Heart left ventricle (tissue), 16 donors: ENCODE measurements at regions of chr10 and their contacts with region 1.

Region 1: GRCh38 chr10:76778914-76779795 is 858.5 kb downstream of the KCNMA1 start:
- DNase-seq: no peak
- ATAC-seq: no peak
- H3K4me3 ChIP-seq: no peak overlapping the region
- H3K27ac ChIP-seq: peak overlapping the region in 2 of 12 donors; percentile 21 to 55
- H3K4me1 ChIP-seq: peaks cover 0 to 24% (median 0%) of the 10 kb centered on the region in 12 donors
- H3K27me3 ChIP-seq: no peaks in the 10 kb centered on the region
- CTCF ChIP-seq: peak in 2 of 12 donors; percentile 14 to 27
- POLR2A ChIP-seq: no peak

Region 2: DNA sequence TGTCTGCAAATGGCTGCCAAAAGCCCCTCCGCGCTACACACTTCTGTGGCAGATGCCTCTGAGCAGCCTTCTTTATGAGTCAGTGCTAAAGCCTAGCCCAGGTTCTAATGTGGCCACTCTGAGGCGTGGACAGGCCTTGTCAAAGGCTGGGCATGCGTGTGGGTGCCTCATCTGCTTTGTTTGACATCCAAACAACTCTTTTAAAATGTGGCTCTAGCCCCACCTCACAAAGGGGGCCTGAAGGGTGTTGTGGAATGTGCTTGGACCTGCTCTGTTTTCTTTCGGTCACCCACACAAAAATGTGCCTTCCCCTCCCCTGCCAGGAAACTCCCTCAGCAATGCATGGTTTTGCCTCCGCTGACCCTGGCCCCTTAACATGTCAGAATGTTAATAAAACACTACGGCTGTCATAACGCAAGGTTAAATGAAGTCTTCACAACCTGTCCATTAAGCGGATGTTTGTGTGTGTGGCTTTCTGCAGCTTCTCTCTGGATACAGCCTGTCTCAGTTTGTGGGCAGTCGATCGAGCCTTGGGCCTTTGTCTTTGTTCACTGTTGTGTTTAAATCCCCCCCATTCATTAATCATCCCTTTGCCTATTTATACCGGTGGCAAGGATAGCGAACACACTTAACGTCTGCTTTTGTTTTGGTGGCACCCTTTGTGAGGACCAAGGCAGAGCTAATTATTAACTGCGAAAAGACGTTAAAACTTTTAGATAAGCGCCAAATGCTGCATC is 628.8 kb before region 1 on chr10:
- intact Hi-C with region 1: no loop called
- DNase-seq: no peak
- ATAC-seq: no peak
- H3K4me3 ChIP-seq: no peak overlapping the region
- H3K27ac ChIP-seq: peak overlapping the region in 1 of 12 donors; percentile 73
- H3K4me1 ChIP-seq: peaks cover 0 to 3% (median 0%) of the 10 kb centered on the region in 12 donors
- H3K27me3 ChIP-seq: no peaks in the 10 kb centered on the region
- CTCF ChIP-seq: no peak
- POLR2A ChIP-seq: no peak

Region 3: DNA sequence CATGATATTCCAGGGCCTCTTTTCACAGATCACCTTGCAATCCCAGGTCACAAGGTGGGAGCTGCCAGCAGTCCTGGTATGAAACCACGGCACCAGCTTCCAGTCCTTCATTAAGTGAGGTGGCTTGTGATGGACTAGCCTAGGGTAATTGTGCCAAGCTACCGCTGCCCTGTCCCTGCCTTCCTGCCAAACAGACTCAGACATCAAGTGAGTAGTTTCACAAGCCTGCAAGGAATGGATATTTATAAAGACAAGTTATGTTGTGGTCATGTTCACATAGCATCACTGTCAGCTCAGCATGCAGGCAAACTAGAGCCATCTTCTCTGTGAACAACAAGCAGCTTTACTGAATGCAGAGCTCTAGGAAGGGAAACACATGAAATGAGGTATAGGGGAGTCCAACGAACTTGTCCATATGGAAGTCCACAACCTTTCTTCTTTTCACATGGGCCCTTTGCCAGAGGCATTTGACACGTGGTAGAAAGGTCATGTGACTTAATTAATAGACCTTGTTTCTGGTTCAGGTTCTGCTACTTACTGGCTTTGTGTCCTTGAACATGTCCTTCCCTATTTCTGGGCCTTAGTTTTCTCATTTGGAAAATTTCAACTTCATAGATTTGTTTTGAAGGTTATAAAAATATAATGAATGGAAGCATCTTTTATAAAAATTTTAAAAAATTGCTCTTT is 202.7 kb before region 1 on chr10:
- intact Hi-C with region 1: loop called in 1 of 10 experiments (anchors 1 kb)
- DNase-seq: peak in 2 of 5 donors; percentile 50 to 65
- ATAC-seq: peak in 3 of 4 donors; percentile 84 to 96 (median 96)
- H3K4me3 ChIP-seq: no peak overlapping the region
- H3K27ac ChIP-seq: peak overlapping the region in 7 of 12 donors; percentile 14 to 73 (median 37)
- H3K4me1 ChIP-seq: peaks cover 0 to 5% (median 0%) of the 10 kb centered on the region in 12 donors
- H3K27me3 ChIP-seq: no peaks in the 10 kb centered on the region
- CTCF ChIP-seq: no peak
- POLR2A ChIP-seq: no peak

Region 4: GRCh38 chr10:76649723-76650127 is 129.4 kb before region 1 on chr10:
- intact Hi-C with region 1: loop called in 1 of 10 experiments (anchors 10 kb)
- DNase-seq: peak in 2 of 5 donors; percentile 22 to 41
- ATAC-seq: peak in 3 of 4 donors; percentile 36 to 73 (median 61)
- H3K4me3 ChIP-seq: no peak overlapping the region
- H3K27ac ChIP-seq: peak overlapping the region in 1 of 12 donors; percentile 61
- H3K4me1 ChIP-seq: no peaks in the 10 kb centered on the region
- H3K27me3 ChIP-seq: no peaks in the 10 kb centered on the region
- CTCF ChIP-seq: no peak
- POLR2A ChIP-seq: no peak

Region 5: GRCh38 chr10:76892766-76893479 is 113.8 kb after region 1 on chr10:
- intact Hi-C with region 1: loop called in 3 of 10 experiments (anchors 5 to 10 kb)
- DNase-seq: no peak
- ATAC-seq: no peak
- H3K4me3 ChIP-seq: no peak overlapping the region
- H3K27ac ChIP-seq: no peak overlapping the region
- H3K4me1 ChIP-seq: peaks cover 0 to 4% (median 0%) of the 10 kb centered on the region in 12 donors
- H3K27me3 ChIP-seq: no peaks in the 10 kb centered on the region
- CTCF ChIP-seq: no peak
- POLR2A ChIP-seq: no peak